CD8-positive, alpha-beta T cell (primary cell): ENCODE measurements at regions of chr9 and their contacts with region 1.

Region 1: GRCh38 chr9:89340332-89340731 is 22.0 kb downstream of the SECISBP2 start:
- DNase-seq: no peak
- ATAC-seq: no peak
- H3K4me3 ChIP-seq: no peak overlapping the region
- H3K4me3 Mint-ChIP-seq: no peak overlapping the region
- H3K27ac ChIP-seq: no peak overlapping the region
- H3K27ac Mint-ChIP-seq: no peak overlapping the region
- H3K4me1 ChIP-seq: no peaks in the 10 kb centered on the region
- H3K4me1 Mint-ChIP-seq: peaks cover 15% of the 10 kb centered on the region
- H3K27me3 ChIP-seq: no peaks in the 10 kb centered on the region
- H3K27me3 Mint-ChIP-seq: no peaks in the 10 kb centered on the region
- CTCF ChIP-seq: no peak

Region 2: GRCh38 chr9:88660611-88661010 is 679.7 kb before region 1 on chr9:
- CTCF ChIA-PET with region 1: no interaction called
- POLR2A ChIA-PET with region 1: no interaction called
- intact Hi-C with region 1: no loop called
- DNase-seq: peak in 1 of 9 experiments; percentile 11
- ATAC-seq: no peak
- H3K4me3 ChIP-seq: no peak overlapping the region
- H3K4me3 Mint-ChIP-seq: no peak overlapping the region
- H3K27ac ChIP-seq: no peak overlapping the region
- H3K27ac Mint-ChIP-seq: no peak overlapping the region
- H3K4me1 ChIP-seq: no peaks in the 10 kb centered on the region
- H3K4me1 Mint-ChIP-seq: no peaks in the 10 kb centered on the region
- H3K27me3 ChIP-seq: no peaks in the 10 kb centered on the region
- H3K27me3 Mint-ChIP-seq: peaks cover 7% of the 10 kb centered on the region
- CTCF ChIP-seq: no peak

Region 3: DNA sequence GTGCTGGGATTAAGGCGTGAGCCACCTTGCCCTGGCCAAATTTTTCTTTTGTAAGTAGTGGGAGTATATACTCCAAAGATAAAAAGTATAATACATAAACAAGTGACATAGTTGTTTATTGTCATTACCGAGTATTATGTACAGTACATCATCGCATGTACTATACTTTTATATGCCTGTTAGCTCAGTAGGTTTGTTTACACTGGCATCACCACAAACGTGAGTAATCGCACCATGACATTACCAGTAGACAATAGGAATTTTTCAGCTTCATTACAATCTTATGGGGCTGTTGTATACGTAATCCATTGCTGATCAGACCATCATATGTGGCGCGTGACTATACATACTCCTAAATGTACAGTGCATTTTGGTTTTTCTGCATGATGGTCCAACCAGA is 12.3 kb before region 1 on chr9:
- CTCF ChIA-PET with region 1: no interaction called
- POLR2A ChIA-PET with region 1: no interaction called
- intact Hi-C with region 1: no loop called
- DNase-seq: no peak
- ATAC-seq: no peak
- H3K4me3 ChIP-seq: no peak overlapping the region
- H3K4me3 Mint-ChIP-seq: no peak overlapping the region
- H3K27ac ChIP-seq: no peak overlapping the region
- H3K27ac Mint-ChIP-seq: no peak overlapping the region
- H3K4me1 ChIP-seq: no peaks in the 10 kb centered on the region
- H3K4me1 Mint-ChIP-seq: peaks cover 41% of the 10 kb centered on the region
- H3K27me3 ChIP-seq: no peaks in the 10 kb centered on the region
- H3K27me3 Mint-ChIP-seq: no peaks in the 10 kb centered on the region
- CTCF ChIP-seq: no peak

Region 4: GRCh38 chr9:89390578-89391116 is 50.3 kb after region 1 on chr9:
- CTCF ChIA-PET with region 1: no interaction called
- POLR2A ChIA-PET with region 1: no interaction called
- intact Hi-C with region 1: loop called in 1 of 2 experiments (anchors 5 kb)
- DNase-seq: no peak
- ATAC-seq: no peak
- H3K4me3 ChIP-seq: no peak overlapping the region
- H3K4me3 Mint-ChIP-seq: no peak overlapping the region
- H3K27ac ChIP-seq: no peak overlapping the region
- H3K27ac Mint-ChIP-seq: peak overlapping the region; percentile 45
- H3K4me1 ChIP-seq: no peaks in the 10 kb centered on the region
- H3K4me1 Mint-ChIP-seq: peaks cover 2% of the 10 kb centered on the region
- H3K27me3 ChIP-seq: no peaks in the 10 kb centered on the region
- H3K27me3 Mint-ChIP-seq: no peaks in the 10 kb centered on the region
- CTCF ChIP-seq: no peak